ENCODE measurements at regions of chr6 and their contacts with region 1.

Region 1: GRCh38 chr6:27753668-27754407 is 158.4 kb downstream of the OR2B2 start:
- DNase-seq: peak; percentile 81 to 90
- H3K4me3 ChIP-seq: peak overlapping the region; percentile 47
- H3K4me3 Mint-ChIP-seq: peak overlapping the region; percentile 74
- H3K27ac Mint-ChIP-seq: peak overlapping the region; percentile 83
- H3K4me1 ChIP-seq: no peaks in the 10 kb centered on the region
- H3K4me1 Mint-ChIP-seq: peaks cover 16% of the 10 kb centered on the region
- H3K27me3 ChIP-seq: no peaks in the 10 kb centered on the region
- H3K27me3 Mint-ChIP-seq: no peaks in the 10 kb centered on the region
- CTCF ChIP-seq: peak in 1 of 2 experiments; percentile 13

Region 2: DNA sequence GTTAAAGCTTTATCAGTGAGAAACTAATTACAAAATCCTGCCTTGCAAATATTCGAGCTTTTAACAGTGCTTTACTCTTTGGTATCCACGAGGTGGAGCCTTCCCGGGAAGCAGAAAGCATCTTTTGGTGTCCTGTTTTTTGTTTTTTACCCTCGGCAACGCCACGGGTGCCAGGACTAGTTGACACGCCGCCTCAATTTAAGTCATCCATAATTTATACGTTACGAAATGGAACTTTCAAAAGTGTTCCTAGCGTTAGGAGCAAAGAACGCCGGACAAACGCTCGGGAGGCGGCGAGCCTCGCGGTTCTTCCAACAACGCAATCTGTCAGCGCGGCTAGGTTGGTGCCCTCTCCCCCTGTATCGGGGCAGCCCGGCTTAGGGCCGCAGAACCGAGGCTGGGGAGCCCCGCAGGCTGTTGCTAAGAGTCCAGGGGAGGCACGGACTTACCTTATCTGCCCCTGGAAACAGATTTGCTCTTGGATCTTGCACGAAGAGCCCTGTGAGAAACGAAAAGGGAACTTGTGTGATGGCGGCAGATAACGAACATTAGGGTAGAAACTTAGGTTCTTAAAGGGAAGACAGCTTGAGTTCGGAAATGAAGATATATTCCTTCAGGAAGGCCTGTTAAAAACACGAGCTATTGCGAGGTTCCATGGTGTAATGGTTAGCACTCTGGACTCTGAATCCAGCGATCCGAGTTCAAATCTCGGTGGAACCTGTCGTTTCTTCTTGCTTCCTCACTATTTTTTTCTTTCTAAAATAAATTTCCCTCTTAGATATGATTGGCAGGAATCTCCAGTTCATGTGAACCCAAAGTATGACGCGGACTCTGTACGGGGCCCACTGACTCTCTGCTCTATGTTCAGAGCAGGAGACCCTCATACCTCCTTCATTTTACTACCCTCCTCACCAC is 234.7 kb before region 1 on chr6:
- CTCF ChIA-PET with region 1: interaction called, 21 read pairs
- POLR2A ChIA-PET with region 1: no interaction called
- intact Hi-C with region 1: loop called (anchors 2 kb)
- DNase-seq: peak; percentile 58 to 77
- H3K4me3 ChIP-seq: peak overlapping the region; percentile 81
- H3K4me3 Mint-ChIP-seq: peak overlapping the region; percentile 85
- H3K27ac Mint-ChIP-seq: peak overlapping the region; percentile 94
- H3K4me1 ChIP-seq: no peaks in the 10 kb centered on the region
- H3K4me1 Mint-ChIP-seq: no peaks in the 10 kb centered on the region
- H3K27me3 ChIP-seq: no peaks in the 10 kb centered on the region
- H3K27me3 Mint-ChIP-seq: no peaks in the 10 kb centered on the region
- CTCF ChIP-seq: peak; percentile 62 to 71

Region 3: GRCh38 chr6:27630727-27631608 is 122.9 kb before region 1 on chr6:
- CTCF ChIA-PET with region 1: interaction called, 8 read pairs
- POLR2A ChIA-PET with region 1: no interaction called
- intact Hi-C with region 1: loop called (anchors 2 kb)
- DNase-seq: peak; percentile 80 to 82
- H3K4me3 ChIP-seq: peak overlapping the region; percentile 51
- H3K4me3 Mint-ChIP-seq: peak overlapping the region; percentile 90
- H3K27ac Mint-ChIP-seq: peak overlapping the region; percentile 88
- H3K4me1 ChIP-seq: peaks cover 3% of the 10 kb centered on the region; the same call in 1 of the 2 replicates
- H3K4me1 Mint-ChIP-seq: no peaks in the 10 kb centered on the region
- H3K27me3 ChIP-seq: no peaks in the 10 kb centered on the region
- H3K27me3 Mint-ChIP-seq: no peaks in the 10 kb centered on the region
- CTCF ChIP-seq: peak; percentile 24 to 48

Region 4: GRCh38 chr6:27694545-27694870 is 59.3 kb before region 1 on chr6:
- CTCF ChIA-PET with region 1: interaction called, 3 read pairs
- POLR2A ChIA-PET with region 1: no interaction called
- intact Hi-C with region 1: loop called (anchors 1 kb)
- DNase-seq: no peak
- H3K4me3 ChIP-seq: peak overlapping the region; percentile 63
- H3K4me3 Mint-ChIP-seq: peak overlapping the region; percentile 95
- H3K27ac Mint-ChIP-seq: peak overlapping the region; percentile 91
- H3K4me1 ChIP-seq: 0 out of 2 replicates have a peak, but pooled peaks cover 3% of the 10 kb centered on the region
- H3K4me1 Mint-ChIP-seq: peaks cover 6% of the 10 kb centered on the region
- H3K27me3 ChIP-seq: no peaks in the 10 kb centered on the region
- H3K27me3 Mint-ChIP-seq: no peaks in the 10 kb centered on the region
- CTCF ChIP-seq: no peak

Region 5: DNA sequence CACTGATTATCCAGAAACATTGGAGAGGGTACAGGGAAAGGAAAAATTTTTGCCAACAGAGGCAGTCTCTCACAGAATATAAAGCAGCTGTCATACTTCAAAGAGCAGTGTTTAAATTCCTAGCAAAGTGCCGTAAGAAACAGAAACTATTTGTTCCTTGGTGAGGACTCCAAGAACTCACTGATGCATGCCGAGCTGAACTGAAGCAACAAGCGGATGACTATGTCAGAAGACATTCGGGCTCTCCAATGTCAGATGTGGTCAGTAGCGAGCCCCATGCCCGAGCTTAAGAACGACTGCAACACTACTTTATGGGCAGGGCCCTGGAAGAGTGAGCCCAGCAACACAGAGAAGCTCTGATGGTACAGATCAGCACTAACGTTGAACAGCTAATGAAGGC is 257.9 kb after region 1 on chr6:
- CTCF ChIA-PET with region 1: no interaction called
- POLR2A ChIA-PET with region 1: no interaction called
- intact Hi-C with region 1: no loop called
- DNase-seq: no peak
- H3K4me3 ChIP-seq: no peak overlapping the region
- H3K4me3 Mint-ChIP-seq: no peak overlapping the region
- H3K27ac Mint-ChIP-seq: no peak overlapping the region
- H3K4me1 ChIP-seq: no peaks in the 10 kb centered on the region
- H3K4me1 Mint-ChIP-seq: no peaks in the 10 kb centered on the region
- H3K27me3 ChIP-seq: no peaks in the 10 kb centered on the region; the same call in 1 of the 2 replicates
- H3K27me3 Mint-ChIP-seq: peaks cover 8% of the 10 kb centered on the region
- CTCF ChIP-seq: no peak

Region 6: GRCh38 chr6:28258877-28259767 is 505.3 kb after region 1 on chr6 and contains the start of gene NKAPL:
- CTCF ChIA-PET with region 1: no interaction called
- POLR2A ChIA-PET with region 1: no interaction called
- intact Hi-C with region 1: no loop called
- DNase-seq: no peak
- H3K4me3 ChIP-seq: no peak within 1 kb of the TSS
- H3K4me3 Mint-ChIP-seq: no peak within 1 kb of the TSS
- H3K27ac Mint-ChIP-seq: no peak within 1 kb of the TSS
- H3K4me1 ChIP-seq: 0 out of 2 replicates have a peak, but pooled peaks cover 1% of the 10 kb centered on the region
- H3K4me1 Mint-ChIP-seq: no peaks in the 10 kb centered on the region
- H3K27me3 ChIP-seq: no peaks in the 10 kb centered on the region
- H3K27me3 Mint-ChIP-seq: peaks cover 17% of the 10 kb centered on the region
- CTCF ChIP-seq: no peak
- total RNA-seq, gene NKAPL: not detected in 2 replicates